ENCODE measurements at regions of chr1 and their contacts with region 1.

Region 1: GRCh38 chr1:165717918-165718515 is 19.7 kb upstream of the ALDH9A1 start:
- DNase-seq: peak; percentile 70
- H3K4me3 ChIP-seq: no peak overlapping the region
- H3K27ac ChIP-seq: no peak overlapping the region
- H3K4me1 ChIP-seq: no peaks in the 10 kb centered on the region
- H3K27me3 ChIP-seq: no peaks in the 10 kb centered on the region
- CTCF ChIP-seq: peak; percentile 83

Region 2: GRCh38 chr1:165392634-165393571 is 325.1 kb before region 1 on chr1:
- CTCF ChIA-PET with region 1: no interaction called
- POLR2A ChIA-PET with region 1: no interaction called
- intact Hi-C with region 1: loop called (anchors 10 kb)
- DNase-seq: peak; percentile 85
- H3K4me3 ChIP-seq: peak overlapping the region; percentile 22
- H3K27ac ChIP-seq: no peak overlapping the region
- H3K4me1 ChIP-seq: no peaks in the 10 kb centered on the region
- H3K27me3 ChIP-seq: peaks cover 8% of the 10 kb centered on the region
- CTCF ChIP-seq: peak; percentile 95

Region 3: DNA sequence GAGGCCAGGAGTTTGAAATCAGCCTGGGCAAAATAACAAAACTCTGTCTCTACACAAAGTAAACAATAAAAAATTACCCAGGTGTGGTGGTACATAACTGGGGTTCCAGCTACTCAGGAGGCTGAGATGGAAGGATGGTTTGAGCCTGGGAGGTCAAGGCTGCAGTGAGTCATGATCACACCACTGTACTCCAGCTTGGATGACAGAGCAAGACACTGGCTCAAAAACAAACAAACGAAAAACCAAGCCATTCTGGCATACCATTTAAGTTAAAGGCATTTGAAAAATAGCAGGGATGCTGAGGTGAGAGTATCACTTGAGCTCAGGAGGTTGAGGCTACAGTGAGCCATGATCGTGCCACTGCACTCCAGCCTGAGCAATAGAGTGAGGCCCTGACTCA is 14.4 kb before region 1 on chr1:
- CTCF ChIA-PET with region 1: no interaction called
- POLR2A ChIA-PET with region 1: no interaction called
- intact Hi-C with region 1: no loop called
- DNase-seq: no peak
- H3K4me3 ChIP-seq: no peak overlapping the region
- H3K27ac ChIP-seq: no peak overlapping the region
- H3K4me1 ChIP-seq: no peaks in the 10 kb centered on the region
- H3K27me3 ChIP-seq: no peaks in the 10 kb centered on the region
- CTCF ChIP-seq: no peak

Region 4: GRCh38 chr1:165738794-165739193 is 20.8 kb after region 1 on chr1:
- CTCF ChIA-PET with region 1: interaction called, 3 read pairs
- POLR2A ChIA-PET with region 1: interaction called, 11 read pairs
- intact Hi-C with region 1: no loop called
- DNase-seq: no peak
- H3K4me3 ChIP-seq: no peak overlapping the region
- H3K27ac ChIP-seq: no peak overlapping the region
- H3K4me1 ChIP-seq: no peaks in the 10 kb centered on the region
- H3K27me3 ChIP-seq: no peaks in the 10 kb centered on the region
- CTCF ChIP-seq: no peak

Region 5: GRCh38 chr1:165914136-165914798 is 196.2 kb after region 1 on chr1:
- CTCF ChIA-PET with region 1: no interaction called
- POLR2A ChIA-PET with region 1: no interaction called
- intact Hi-C with region 1: loop called (anchors 1 kb)
- DNase-seq: peak; percentile 79
- H3K4me3 ChIP-seq: no peak overlapping the region
- H3K27ac ChIP-seq: no peak overlapping the region
- H3K4me1 ChIP-seq: no peaks in the 10 kb centered on the region
- H3K27me3 ChIP-seq: no peaks in the 10 kb centered on the region
- CTCF ChIP-seq: peak; percentile 90

Region 6: GRCh38 chr1:166479052-166479631 is 761.1 kb after region 1 on chr1:
- CTCF ChIA-PET with region 1: no interaction called
- POLR2A ChIA-PET with region 1: no interaction called
- intact Hi-C with region 1: loop called (anchors 5 kb)
- DNase-seq: peak; percentile 41
- H3K4me3 ChIP-seq: no peak overlapping the region
- H3K27ac ChIP-seq: no peak overlapping the region
- H3K4me1 ChIP-seq: no peaks in the 10 kb centered on the region
- H3K27me3 ChIP-seq: peaks cover 17% of the 10 kb centered on the region
- CTCF ChIP-seq: peak; percentile 86